Heart right ventricle (tissue), 16 donors: ENCODE measurements at regions of chr10 and their contacts with region 1.

Region 1: GRCh38 chr10:114821293-114821914 is at the start of gene FHIP2A:
- DNase-seq: peak; percentile 78 to 86
- ATAC-seq: peak; percentile 78 to 97 (median 88)
- H3K4me3 ChIP-seq: peak within 1 kb of the TSS; percentile 66 to 98 (median 86)
- H3K27ac ChIP-seq: peak within 1 kb of the TSS; percentile 95 to 99 (median 97)
- H3K4me1 ChIP-seq: peaks cover 4 to 44% (median 39%) of the 10 kb centered on the region in 9 donors
- H3K27me3 ChIP-seq: no peaks in the 10 kb centered on the region
- CTCF ChIP-seq: peak; percentile 37 to 85 (median 66)
- total RNA-seq, gene FHIP2A: 19.1 to 36.6 (median 27.7) TPM

Region 2: DNA sequence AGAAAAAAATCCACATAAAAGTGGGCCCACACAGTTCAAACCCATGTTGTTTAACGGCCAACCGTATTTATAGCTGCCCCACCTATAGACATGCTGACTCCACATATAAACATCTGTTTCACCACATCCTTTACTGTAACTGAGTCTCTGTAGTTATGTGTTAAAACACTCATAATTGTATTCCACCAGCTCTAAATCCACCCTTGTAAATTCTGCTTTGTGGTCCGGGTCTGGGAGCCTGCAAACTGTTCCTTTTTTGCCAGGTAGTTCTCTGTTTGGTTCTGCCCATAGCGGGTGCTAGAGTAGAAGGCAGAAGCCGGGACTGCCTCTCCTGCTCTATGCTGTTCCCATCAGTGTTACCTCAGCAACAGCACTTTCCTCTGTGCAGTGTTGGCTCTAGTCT is 20.0 kb before region 1 on chr10:
- intact Hi-C with region 1: loop called in 1 of 10 experiments (anchors 1 kb)
- DNase-seq: no peak
- ATAC-seq: peak in 6 of 8 donors; percentile 47 to 86 (median 70)
- H3K4me3 ChIP-seq: no peak overlapping the region
- H3K27ac ChIP-seq: no peak overlapping the region
- H3K4me1 ChIP-seq: peaks cover 0 to 7% (median 0%) of the 10 kb centered on the region in 9 donors
- H3K27me3 ChIP-seq: no peaks in the 10 kb centered on the region
- CTCF ChIP-seq: peak in 1 of 9 donors; percentile 3